T-cell (primary cell): ENCODE measurements at regions of chr1 and their contacts with region 1.

Region 1: DNA sequence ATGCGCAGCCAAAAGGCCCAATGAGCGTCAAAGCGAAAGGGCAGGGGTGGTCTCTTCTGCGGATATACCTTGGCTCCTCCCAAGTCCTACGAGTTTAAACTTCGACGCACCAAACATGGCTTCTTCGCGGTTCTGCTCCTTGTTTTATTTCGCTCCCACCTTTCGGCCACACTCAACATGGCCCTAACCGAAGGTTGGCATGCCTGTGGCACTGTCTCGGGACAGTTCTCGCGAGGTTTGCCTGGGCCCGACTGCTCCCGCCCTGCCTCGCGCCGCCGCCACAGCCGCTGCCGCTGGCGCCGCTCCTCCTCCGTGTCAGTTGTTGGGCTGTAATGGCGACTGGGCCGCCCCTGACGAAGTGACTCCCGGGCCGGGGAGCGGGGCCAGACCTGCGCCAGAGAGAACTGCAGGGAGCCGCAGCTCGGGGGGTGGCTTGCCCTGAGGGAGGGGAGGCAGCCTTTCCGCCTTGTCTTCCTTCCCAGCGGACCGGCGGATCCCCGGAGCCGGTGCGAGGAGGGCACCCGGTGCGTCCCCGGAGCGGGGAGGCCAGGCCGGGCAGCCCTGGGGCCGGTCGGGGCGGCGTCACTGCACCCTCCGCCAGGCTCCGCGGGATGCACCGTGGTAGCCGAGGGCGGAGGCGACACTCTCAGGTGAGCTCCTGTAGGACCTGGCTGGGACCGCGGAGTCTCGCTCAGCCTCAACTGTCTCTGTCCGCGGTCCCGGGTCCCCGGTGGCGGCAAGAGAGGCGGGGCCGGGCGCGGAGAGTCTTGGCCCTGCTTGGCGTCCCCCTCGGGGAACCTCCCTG is at the start of gene CEP350:
- DNase-seq: peak; percentile 92 to 100 (median 98)
- ATAC-seq: peak; percentile 87 to 94 (median 91)
- H3K4me3 ChIP-seq: peak within 1 kb of the TSS; percentile 86
- H3K4me3 Mint-ChIP-seq: peak within 1 kb of the TSS; percentile 83 to 89 (median 84)
- H3K27ac ChIP-seq: peak within 1 kb of the TSS; percentile 94
- H3K27ac Mint-ChIP-seq: peak within 1 kb of the TSS; percentile 97 to 98
- H3K4me1 ChIP-seq: peaks cover 28 to 29% of the 10 kb centered on the region in 2 experiments
- H3K4me1 Mint-ChIP-seq: peaks cover 60 to 66% (median 62%) of the 10 kb centered on the region in 3 donors
- H3K27me3 ChIP-seq: no peaks in the 10 kb centered on the region
- H3K27me3 Mint-ChIP-seq: no peaks in the 10 kb centered on the region
- total RNA-seq, gene CEP350: 62.1 to 81.3 (median 72.3) TPM

Region 2: GRCh38 chr1:179840107-179840506 is 114.6 kb before region 1 on chr1:
- CTCF ChIA-PET with region 1: no interaction called
- POLR2A ChIA-PET with region 1: no interaction called
- DNase-seq: no peak
- ATAC-seq: no peak
- H3K4me3 ChIP-seq: no peak overlapping the region
- H3K4me3 Mint-ChIP-seq: no peak overlapping the region
- H3K27ac ChIP-seq: no peak overlapping the region
- H3K27ac Mint-ChIP-seq: no peak overlapping the region
- H3K4me1 ChIP-seq: no peaks in the 10 kb centered on the region
- H3K4me1 Mint-ChIP-seq: no peaks in the 10 kb centered on the region
- H3K27me3 ChIP-seq: no peaks in the 10 kb centered on the region
- H3K27me3 Mint-ChIP-seq: no peaks in the 10 kb centered on the region

Region 3: DNA sequence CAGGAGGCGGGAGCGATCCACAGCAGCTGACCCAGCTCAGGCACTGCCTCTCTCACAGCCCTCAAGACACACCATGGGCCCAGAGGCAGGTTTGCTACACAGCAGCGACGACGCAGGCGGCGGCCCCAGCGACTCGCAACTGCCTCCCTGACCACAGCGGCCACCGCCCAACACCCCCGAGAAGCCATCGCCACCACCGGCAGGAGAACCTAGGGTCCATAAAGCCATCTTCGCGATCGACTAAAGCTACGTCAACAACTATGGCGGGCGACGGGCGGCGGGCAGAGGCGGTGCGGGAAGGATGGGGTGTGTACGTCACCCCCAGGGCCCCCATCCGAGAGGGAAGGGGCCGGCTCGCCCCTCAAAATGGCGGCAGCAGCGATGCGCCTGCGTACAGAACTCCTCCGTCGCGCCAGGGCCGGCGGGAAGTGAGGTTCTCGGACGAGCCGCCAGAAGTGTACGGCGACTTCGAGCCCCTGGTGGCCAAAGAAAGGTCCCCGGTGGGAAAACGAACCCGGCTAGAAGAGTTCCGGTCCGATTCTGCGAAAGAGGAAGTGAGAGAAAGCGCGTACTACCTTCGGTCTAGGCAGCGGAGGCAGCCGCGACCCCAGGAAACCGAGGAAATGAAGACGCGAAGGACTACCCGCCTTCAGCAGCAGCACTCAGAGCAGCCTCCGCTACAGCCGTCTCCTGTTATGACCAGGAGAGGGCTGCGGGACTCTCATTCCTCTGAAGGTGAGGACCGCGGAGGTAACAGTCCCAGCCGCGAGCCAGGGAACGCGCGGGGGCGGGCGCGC is 72.3 kb before region 1 on chr1 and contains the start of gene TOR1AIP1:
- CTCF ChIA-PET with region 1: interaction called in 1 of 2 experiments, 6 read pairs
- POLR2A ChIA-PET with region 1: interaction called in 1 of 2 experiments, 22 read pairs
- DNase-seq: peak; percentile 93 to 99 (median 97)
- ATAC-seq: peak; percentile 79 to 84 (median 80)
- H3K4me3 ChIP-seq: peak within 1 kb of the TSS; percentile 92 to 96
- H3K4me3 Mint-ChIP-seq: peak within 1 kb of the TSS; percentile 93 to 99 (median 95)
- H3K27ac ChIP-seq: peak within 1 kb of the TSS; percentile 96
- H3K27ac Mint-ChIP-seq: peak within 1 kb of the TSS; percentile 100
- H3K4me1 ChIP-seq: peaks cover 18 to 26% of the 10 kb centered on the region in 2 experiments
- H3K4me1 Mint-ChIP-seq: peaks cover 60 to 72% (median 69%) of the 10 kb centered on the region in 3 donors
- H3K27me3 ChIP-seq: no peaks in the 10 kb centered on the region
- H3K27me3 Mint-ChIP-seq: no peaks in the 10 kb centered on the region
- total RNA-seq, gene TOR1AIP1: 41.1 to 60.3 (median 44.7) TPM